ENCODE measurements at regions of chr10 and their contacts with region 1.

Region 1: GRCh38 chr10:109883859-109884771 is 39.2 kb downstream of the XPNPEP1 start:
- DNase-seq: peak; percentile 65 to 83 (median 68)
- ATAC-seq: peak; percentile 83 to 97 (median 94)
- H3K4me3 ChIP-seq: no peak overlapping the region
- H3K27ac ChIP-seq: peak overlapping the region in 2 of 4 donors; percentile 20 to 29
- H3K4me1 ChIP-seq: peaks cover 0 to 5% (median 4%) of the 10 kb centered on the region in 3 donors
- H3K27me3 ChIP-seq: no peaks in the 10 kb centered on the region
- CTCF ChIP-seq: peak; percentile 88 to 96 (median 88)

Region 2: GRCh38 chr10:109529258-109529657 is 354.9 kb before region 1 on chr10:
- intact Hi-C with region 1: no loop called
- DNase-seq: no peak
- ATAC-seq: no peak
- H3K4me3 ChIP-seq: no peak overlapping the region
- H3K27ac ChIP-seq: no peak overlapping the region
- H3K4me1 ChIP-seq: no peaks in the 10 kb centered on the region
- H3K27me3 ChIP-seq: no peaks in the 10 kb centered on the region
- CTCF ChIP-seq: no peak

Region 3: GRCh38 chr10:109790647-109791046 is 93.5 kb before region 1 on chr10:
- intact Hi-C with region 1: no loop called
- DNase-seq: no peak
- ATAC-seq: no peak
- H3K4me3 ChIP-seq: no peak overlapping the region
- H3K27ac ChIP-seq: no peak overlapping the region
- H3K4me1 ChIP-seq: no peaks in the 10 kb centered on the region
- H3K27me3 ChIP-seq: no peaks in the 10 kb centered on the region
- CTCF ChIP-seq: no peak

Region 4: GRCh38 chr10:110129490-110129889 is 245.4 kb after region 1 on chr10:
- intact Hi-C with region 1: loop called in 1 of 3 experiments (anchors 10 kb)
- DNase-seq: no peak
- ATAC-seq: no peak
- H3K4me3 ChIP-seq: no peak overlapping the region
- H3K27ac ChIP-seq: no peak overlapping the region
- H3K4me1 ChIP-seq: no peaks in the 10 kb centered on the region
- H3K27me3 ChIP-seq: no peaks in the 10 kb centered on the region
- CTCF ChIP-seq: no peak

Region 5: GRCh38 chr10:110285501-110285900 is 401.4 kb after region 1 on chr10:
- intact Hi-C with region 1: loop called in 1 of 3 experiments (anchors 10 kb)
- DNase-seq: no peak
- ATAC-seq: no peak
- H3K4me3 ChIP-seq: no peak overlapping the region
- H3K27ac ChIP-seq: no peak overlapping the region
- H3K4me1 ChIP-seq: no peaks in the 10 kb centered on the region
- H3K27me3 ChIP-seq: no peaks in the 10 kb centered on the region
- CTCF ChIP-seq: no peak

Measured in pancreas (tissue), 10 donors.